ENCODE measurements at regions of chr7 and their contacts with region 1.

Region 1: GRCh38 chr7:77649716-77650349 is 46.4 kb upstream of the RSBN1L start:
- DNase-seq: no peak
- H3K4me3 ChIP-seq: no peak overlapping the region
- H3K27ac ChIP-seq: no peak overlapping the region
- H3K4me1 ChIP-seq: peaks cover 1% of the 10 kb centered on the region
- H3K27me3 ChIP-seq: no peaks in the 10 kb centered on the region
- CTCF ChIP-seq: no peak

Region 2: DNA sequence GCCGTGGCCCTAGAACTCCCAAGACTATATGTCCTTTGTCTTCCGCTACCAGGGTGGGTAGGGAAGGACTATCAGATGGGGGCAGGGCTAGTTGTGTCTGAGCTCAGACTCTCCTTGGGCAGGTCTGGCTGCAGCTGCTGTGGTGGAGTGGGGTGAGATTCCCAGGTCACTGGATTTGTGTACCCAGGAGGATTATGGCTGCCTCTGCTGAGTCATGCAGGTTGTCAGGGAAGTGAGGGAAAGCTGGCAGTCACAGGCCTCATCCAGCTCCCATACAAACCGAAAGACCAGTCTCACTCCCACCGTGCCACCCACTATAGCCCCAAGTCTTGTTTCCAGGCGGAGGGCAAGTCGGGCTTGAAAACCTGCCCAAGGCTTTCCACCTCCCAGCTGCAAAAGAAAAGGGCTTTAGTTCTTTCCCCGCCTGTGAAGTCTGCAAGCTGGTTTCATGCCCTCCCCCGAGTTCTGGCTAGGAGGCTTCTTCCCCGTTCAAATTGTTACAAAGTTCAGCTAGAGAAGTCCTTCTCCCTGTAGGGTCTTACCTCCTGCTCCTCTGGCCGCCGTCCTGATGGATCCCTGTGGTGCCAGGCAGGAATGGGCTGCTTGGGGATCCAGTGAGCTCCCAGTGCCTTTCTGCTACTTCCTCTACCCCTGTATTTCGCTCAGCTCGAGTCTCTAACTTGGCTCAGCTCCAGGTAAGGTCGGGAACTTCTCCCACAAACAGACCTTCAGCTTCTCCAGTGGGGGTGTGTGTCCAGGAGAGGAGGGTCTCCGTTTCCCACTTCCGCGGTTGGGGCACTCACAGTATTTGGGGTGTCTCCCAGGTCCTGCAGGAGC is 343.4 kb before region 1 on chr7:
- CTCF ChIA-PET with region 1: no interaction called
- POLR2A ChIA-PET with region 1: no interaction called
- intact Hi-C with region 1: no loop called
- DNase-seq: no peak
- H3K4me3 ChIP-seq: no peak overlapping the region
- H3K27ac ChIP-seq: peak overlapping the region; percentile 16
- H3K4me1 ChIP-seq: no peaks in the 10 kb centered on the region
- H3K27me3 ChIP-seq: no peaks in the 10 kb centered on the region
- CTCF ChIP-seq: no peak

Region 3: DNA sequence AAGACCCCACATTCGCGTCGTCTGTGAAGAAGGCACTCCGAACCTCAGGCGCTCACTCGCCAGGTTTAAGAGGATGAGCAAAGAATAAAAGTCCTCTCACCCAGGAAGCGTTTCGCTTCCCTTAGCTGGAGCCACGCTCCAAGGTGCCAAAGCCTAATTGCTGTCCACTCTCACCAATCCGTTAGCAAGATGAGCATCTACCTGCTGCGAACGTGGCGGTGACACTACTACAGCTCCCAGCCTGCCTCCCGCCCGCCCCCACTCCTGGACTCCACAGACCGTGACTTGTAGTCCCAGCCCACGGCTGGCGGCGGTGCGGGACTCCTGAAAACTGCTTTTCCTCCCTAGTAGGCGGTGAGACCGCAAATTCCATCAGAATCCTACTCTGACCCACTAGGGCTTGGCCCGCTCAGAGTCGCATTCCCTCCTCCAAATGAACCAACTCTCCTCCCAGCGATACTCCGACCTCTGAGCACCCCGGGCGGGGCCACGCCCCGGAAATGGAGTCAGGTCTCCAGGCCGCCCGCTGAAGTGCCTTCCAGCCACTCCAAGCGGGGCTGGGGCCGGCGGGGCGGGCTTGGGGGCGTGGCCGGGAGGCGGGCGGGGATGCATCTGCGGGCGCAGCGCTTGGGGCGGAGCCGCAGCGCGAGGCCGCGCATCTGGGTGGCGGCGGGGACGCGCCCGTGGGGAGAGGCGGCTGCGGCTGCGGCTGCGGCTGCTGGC is 113.3 kb before region 1 on chr7:
- CTCF ChIA-PET with region 1: no interaction called
- POLR2A ChIA-PET with region 1: no interaction called
- intact Hi-C with region 1: loop called (anchors 5 kb)
- DNase-seq: peak; percentile 98
- H3K4me3 ChIP-seq: peak overlapping the region; percentile 82
- H3K27ac ChIP-seq: peak overlapping the region; percentile 76
- H3K4me1 ChIP-seq: no peaks in the 10 kb centered on the region
- H3K27me3 ChIP-seq: no peaks in the 10 kb centered on the region
- CTCF ChIP-seq: no peak

Region 4: DNA sequence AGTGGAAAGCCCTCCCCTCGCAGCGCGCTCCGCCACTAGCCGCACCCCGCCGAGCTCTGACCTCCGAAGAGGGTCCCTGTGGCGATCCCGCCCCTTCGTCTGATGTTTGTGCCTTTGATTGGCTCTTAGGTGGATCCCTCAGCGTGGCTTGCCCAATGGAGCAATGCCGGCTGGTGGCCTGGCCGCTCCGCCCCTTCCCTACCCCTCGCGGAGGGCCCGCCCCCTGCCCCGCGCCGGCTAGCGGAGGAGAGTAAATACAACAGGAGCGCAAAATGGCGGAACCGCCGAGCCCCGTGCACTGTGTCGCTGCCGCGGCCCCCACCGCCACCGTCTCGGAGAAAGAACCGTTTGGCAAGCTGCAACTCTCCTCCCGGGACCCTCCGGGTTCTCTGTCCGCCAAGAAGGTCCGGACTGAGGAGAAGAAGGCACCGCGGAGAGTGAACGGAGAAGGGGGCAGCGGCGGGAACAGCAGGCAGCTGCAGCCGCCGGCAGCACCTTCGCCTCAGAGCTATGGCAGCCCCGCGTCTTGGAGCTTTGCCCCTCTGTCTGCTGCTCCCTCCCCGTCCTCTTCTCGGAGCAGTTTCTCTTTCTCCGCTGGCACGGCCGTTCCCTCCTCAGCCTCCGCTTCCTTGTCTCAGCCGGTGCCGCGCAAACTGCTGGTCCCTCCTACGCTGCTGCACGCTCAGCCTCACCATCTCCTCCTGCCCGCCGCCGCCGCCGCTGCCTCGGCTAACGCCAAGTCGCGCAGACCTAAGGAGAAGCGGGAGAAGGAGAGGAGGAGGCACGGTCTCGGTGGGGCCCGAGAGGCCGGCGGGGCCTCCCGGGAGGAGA is 46.6 kb after region 1 on chr7 and contains the start of gene RSBN1L:
- CTCF ChIA-PET with region 1: interaction called, 12 read pairs
- POLR2A ChIA-PET with region 1: no interaction called
- intact Hi-C with region 1: no loop called
- DNase-seq: peak; percentile 98
- H3K4me3 ChIP-seq: peak within 1 kb of the TSS; percentile 97
- H3K27ac ChIP-seq: peak within 1 kb of the TSS; percentile 94
- H3K4me1 ChIP-seq: peaks cover 15% of the 10 kb centered on the region
- H3K27me3 ChIP-seq: no peaks in the 10 kb centered on the region
- CTCF ChIP-seq: peak; percentile 50
- total RNA-seq, gene RSBN1L: 22.4 and 23.2 TPM in 2 replicates

Region 5: GRCh38 chr7:77823787-77824186 is 174.0 kb after region 1 on chr7:
- CTCF ChIA-PET with region 1: no interaction called
- POLR2A ChIA-PET with region 1: no interaction called
- intact Hi-C with region 1: no loop called
- DNase-seq: no peak
- H3K4me3 ChIP-seq: no peak overlapping the region
- H3K27ac ChIP-seq: no peak overlapping the region
- H3K4me1 ChIP-seq: no peaks in the 10 kb centered on the region
- H3K27me3 ChIP-seq: no peaks in the 10 kb centered on the region
- CTCF ChIP-seq: no peak

Measured in A673 (cell line).